Mammary epithelial cell (primary cell): ENCODE measurements at regions of chr3 and their contacts with region 1.

Region 1: DNA sequence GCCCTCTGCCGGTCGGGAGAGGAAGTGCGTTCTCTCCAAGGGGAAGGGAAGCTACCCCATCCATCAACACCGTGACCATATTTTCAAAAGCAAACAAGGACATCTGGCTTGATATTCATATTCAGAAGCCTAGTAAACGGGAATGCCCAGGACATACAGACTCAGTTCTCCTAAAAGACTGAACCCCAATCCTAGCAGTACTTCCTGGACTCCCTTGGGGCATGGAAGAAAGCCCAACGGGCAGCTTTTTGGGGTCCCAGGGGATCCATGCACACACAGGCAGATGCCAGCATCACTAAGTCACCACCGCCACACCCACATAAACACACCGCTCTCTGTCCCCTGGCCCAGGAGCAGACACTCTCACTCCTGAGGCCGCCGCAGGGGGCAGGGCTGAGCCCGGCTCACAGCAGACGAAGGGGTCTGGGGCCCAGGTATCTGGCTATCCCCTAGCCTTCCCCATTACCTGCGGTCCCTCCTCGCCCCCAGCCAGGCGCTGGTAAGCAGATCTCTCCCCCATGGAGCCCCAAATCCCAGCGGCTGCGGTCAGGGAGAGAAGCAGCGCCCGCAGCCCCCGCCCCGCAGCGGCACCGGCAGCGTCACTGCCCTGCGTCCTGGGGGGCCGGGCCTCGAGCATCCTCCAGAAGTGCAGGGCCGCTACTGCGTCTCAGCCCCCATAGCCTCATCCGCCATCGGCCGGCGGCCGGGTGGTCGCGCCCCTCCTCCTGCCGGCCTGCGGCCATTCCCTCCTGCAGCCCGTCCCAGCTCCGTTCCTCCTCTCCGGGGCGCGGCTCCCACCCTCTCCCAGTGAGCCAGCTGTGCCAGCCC is 13.4 kb downstream of the TNK2 start:
- DNase-seq: peak; percentile 78
- H3K4me3 ChIP-seq: peak overlapping the region; percentile 75 to 84 (median 81)
- H3K27ac ChIP-seq: peak overlapping the region; percentile 71
- H3K4me1 ChIP-seq: peaks cover 58% of the 10 kb centered on the region
- H3K27me3 ChIP-seq: no peaks in the 10 kb centered on the region
- CTCF ChIP-seq: peak; percentile 95 to 96

Region 2: DNA sequence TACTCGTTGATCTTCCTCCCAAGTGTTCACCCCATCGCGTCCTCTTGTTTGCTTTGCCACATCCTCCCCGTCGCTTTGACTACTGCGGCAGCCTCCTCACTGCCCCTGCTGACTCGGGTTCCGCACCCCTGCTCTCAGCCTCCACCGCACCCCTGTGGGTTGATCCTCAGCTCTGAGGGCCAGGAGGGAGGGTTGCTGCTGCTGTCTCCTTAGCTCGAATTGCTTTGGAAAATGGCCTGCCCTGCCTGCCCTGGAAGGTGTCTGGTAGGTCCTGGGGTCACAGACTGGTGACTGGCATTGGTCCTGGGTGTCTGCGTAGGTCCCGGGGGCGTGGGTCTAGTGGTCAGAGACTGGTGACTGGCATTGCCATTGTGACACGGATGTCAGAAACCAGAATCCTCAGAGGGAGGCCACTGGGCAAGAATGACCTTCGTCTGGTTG is 92.7 kb before region 1 on chr3:
- CTCF ChIA-PET with region 1: no interaction called
- dilution Hi-C with region 1: no loop called
- in situ Hi-C with region 1: no loop called
- intact Hi-C with region 1: no loop called
- DNase-seq: no peak
- H3K4me3 ChIP-seq: no peak overlapping the region
- H3K27ac ChIP-seq: no peak overlapping the region
- H3K4me1 ChIP-seq: no peaks in the 10 kb centered on the region
- H3K27me3 ChIP-seq: peaks cover 8% of the 10 kb centered on the region
- CTCF ChIP-seq: no peak

Region 3: DNA sequence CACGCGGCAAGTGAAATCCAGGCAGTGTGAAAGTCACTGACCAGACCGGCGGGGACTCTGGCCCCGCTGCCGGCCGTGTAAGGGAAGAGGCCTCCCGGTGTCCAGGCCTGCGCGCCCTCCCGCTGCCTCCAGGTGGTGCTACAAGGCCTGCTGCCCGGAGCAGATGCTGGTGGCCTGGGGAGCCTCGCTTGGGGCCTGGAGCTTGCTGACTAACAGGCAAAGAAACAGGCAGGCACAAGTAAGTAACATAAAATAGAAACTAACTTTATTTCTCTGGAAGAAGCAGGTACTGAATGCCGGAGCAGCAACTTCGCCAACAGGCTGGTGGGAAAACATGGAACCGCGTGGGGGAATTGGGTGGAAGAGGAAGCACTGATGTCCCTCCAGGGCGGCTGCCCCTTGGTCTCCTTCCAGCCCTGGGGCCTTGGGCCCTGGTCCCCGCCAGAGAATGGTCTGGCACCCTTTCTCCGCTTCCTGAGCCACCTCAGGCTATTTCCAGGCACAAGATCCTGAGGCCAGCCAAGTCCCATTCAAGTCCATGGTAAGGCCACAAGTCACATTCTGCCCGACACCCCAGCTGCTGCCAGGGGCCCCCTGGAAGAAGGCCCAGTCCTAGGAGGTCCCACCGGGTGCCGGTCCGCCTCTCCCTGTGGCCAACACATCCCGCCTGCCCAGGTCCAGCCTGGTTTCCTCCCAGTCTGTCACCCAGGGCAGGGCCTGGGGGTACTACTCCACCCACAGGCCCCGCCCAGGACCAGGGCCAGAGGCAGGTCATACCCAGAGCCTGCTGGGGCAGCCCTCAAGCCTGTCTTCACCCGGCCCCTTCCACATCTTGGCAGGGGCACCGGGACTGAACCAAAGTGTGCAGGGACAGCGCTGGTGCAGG is 31.6 kb before region 1 on chr3:
- CTCF ChIA-PET with region 1: interaction called, 21 read pairs
- dilution Hi-C with region 1: no loop called
- in situ Hi-C with region 1: loop called in 1 of 2 experiments (anchors 5 kb)
- intact Hi-C with region 1: loop called (anchors 1 kb)
- DNase-seq: peak; percentile 87
- H3K4me3 ChIP-seq: no peak overlapping the region
- H3K27ac ChIP-seq: peak overlapping the region; percentile 38
- H3K4me1 ChIP-seq: peaks cover 32% of the 10 kb centered on the region
- H3K27me3 ChIP-seq: no peaks in the 10 kb centered on the region
- CTCF ChIP-seq: peak; percentile 91 to 98

Region 4: DNA sequence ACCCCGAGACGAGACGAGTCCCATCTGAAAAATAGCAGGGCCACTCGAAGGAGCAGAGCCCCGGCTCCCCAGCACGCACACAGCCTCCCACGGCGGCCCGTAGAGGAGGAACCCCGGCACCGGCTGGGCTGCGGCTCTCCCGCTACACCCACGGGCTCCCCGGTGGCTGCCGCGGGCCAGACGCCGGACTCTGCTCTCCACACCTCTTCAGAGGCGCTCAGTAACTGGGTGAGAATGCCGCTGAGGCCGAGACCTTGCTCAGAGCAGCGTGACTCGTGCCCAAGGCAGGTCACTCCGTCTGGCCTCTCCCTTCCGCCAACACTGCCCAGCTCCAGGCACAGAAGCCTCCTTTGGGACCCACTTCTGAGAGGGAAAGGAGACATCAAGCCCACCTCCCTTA is 21.0 kb before region 1 on chr3:
- CTCF ChIA-PET with region 1: no interaction called
- dilution Hi-C with region 1: no loop called
- in situ Hi-C with region 1: no loop called
- intact Hi-C with region 1: loop called (anchors 2 kb)
- DNase-seq: peak; percentile 55
- H3K4me3 ChIP-seq: no peak overlapping the region
- H3K27ac ChIP-seq: no peak overlapping the region
- H3K4me1 ChIP-seq: peaks cover 24% of the 10 kb centered on the region
- H3K27me3 ChIP-seq: no peaks in the 10 kb centered on the region
- CTCF ChIP-seq: no peak

Region 5: DNA sequence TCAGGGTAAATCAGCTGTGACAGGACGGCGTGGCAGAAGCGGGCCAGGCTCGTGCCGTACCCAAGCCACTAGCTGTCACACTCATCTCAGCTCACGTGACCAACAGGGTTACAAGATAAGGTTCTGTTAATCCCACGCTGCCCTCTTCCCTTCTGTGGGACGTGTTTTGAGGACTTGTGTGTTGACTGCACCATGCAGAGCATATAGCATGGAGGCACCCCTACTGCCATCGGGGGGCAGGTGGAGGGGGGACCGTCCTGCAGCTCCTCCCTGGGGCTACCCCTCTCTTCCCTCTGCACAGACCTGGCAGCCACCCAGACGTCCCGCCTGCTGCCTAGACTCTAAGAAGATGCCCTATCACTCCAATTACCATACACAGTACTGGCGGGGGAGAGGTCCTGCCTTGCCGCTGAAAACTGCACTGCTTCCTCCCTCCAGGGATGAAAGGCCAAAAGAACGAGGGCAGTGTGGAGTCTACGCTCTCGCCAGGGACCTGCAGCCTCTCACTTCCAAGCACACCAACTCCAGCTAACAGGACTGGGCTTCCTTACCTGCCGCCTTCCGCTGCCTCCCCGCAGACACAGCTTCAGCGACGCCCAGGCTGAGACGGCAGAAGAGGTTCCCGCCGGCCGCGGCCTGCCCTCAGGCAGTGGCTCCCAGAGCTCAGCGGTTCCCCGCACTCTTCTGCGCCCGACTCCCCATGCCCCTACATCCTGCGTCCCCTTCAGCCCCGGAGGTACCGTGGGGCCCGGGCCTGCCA is 13.1 kb after region 1 on chr3 and contains the start of gene TNK2:
- CTCF ChIA-PET with region 1: interaction called, 9 read pairs
- dilution Hi-C with region 1: no loop called
- in situ Hi-C with region 1: no loop called
- intact Hi-C with region 1: loop called (anchors 1 kb)
- DNase-seq: peak; percentile 52
- H3K4me3 ChIP-seq: peak within 1 kb of the TSS; percentile 62 to 80 (median 79)
- H3K27ac ChIP-seq: peak within 1 kb of the TSS; percentile 83
- H3K4me1 ChIP-seq: peaks cover 53% of the 10 kb centered on the region
- H3K27me3 ChIP-seq: no peaks in the 10 kb centered on the region
- CTCF ChIP-seq: no peak
- total RNA-seq, gene TNK2: 20.5 to 107 TPM

Region 6: GRCh38 chr3:195914648-195915473 is 19.9 kb after region 1 on chr3:
- CTCF ChIA-PET with region 1: interaction called, 10 read pairs
- dilution Hi-C with region 1: no loop called
- in situ Hi-C with region 1: no loop called
- intact Hi-C with region 1: loop called (anchors 1 kb)
- DNase-seq: peak; percentile 100
- H3K4me3 ChIP-seq: peak overlapping the region in 1 of 3 experiments; percentile 16
- H3K27ac ChIP-seq: peak overlapping the region; percentile 59
- H3K4me1 ChIP-seq: peaks cover 56% of the 10 kb centered on the region
- H3K27me3 ChIP-seq: no peaks in the 10 kb centered on the region
- CTCF ChIP-seq: peak; percentile 87 to 98

Region 7: GRCh38 chr3:196120271-196120966 is 225.4 kb after region 1 on chr3:
- CTCF ChIA-PET with region 1: no interaction called
- dilution Hi-C with region 1: no loop called
- in situ Hi-C with region 1: no loop called
- intact Hi-C with region 1: no loop called
- DNase-seq: no peak
- H3K4me3 ChIP-seq: no peak overlapping the region
- H3K27ac ChIP-seq: no peak overlapping the region
- H3K4me1 ChIP-seq: no peaks in the 10 kb centered on the region
- H3K27me3 ChIP-seq: no peaks in the 10 kb centered on the region
- CTCF ChIP-seq: no peak